CD4-positive, alpha-beta T cell (primary cell): ENCODE measurements at regions of chr1 and their contacts with region 1.

Region 1: GRCh38 chr1:25997828-25998761 is at the start of gene PAFAH2:
- DNase-seq: peak; percentile 92 to 99 (median 96)
- ATAC-seq: peak; percentile 95
- H3K4me3 ChIP-seq: peak within 1 kb of the TSS; percentile 71
- H3K4me3 Mint-ChIP-seq: peak within 1 kb of the TSS; percentile 91
- H3K27ac ChIP-seq: peak within 1 kb of the TSS; percentile 87 to 93
- H3K27ac Mint-ChIP-seq: peak within 1 kb of the TSS; percentile 97
- H3K4me1 ChIP-seq: peaks cover 21% of the 10 kb centered on the region
- H3K4me1 Mint-ChIP-seq: peaks cover 39% of the 10 kb centered on the region
- H3K27me3 ChIP-seq: no peaks in the 10 kb centered on the region
- H3K27me3 Mint-ChIP-seq: no peaks in the 10 kb centered on the region
- CTCF ChIP-seq: peak; percentile 90
- total RNA-seq, gene PAFAH2: 7.9 to 8.1 TPM

Region 2: GRCh38 chr1:25090707-25091422 is 907.2 kb before region 1 on chr1:
- CTCF ChIA-PET with region 1: no interaction called
- POLR2A ChIA-PET with region 1: no interaction called
- intact Hi-C with region 1: no loop called
- DNase-seq: no peak
- ATAC-seq: no peak
- H3K4me3 ChIP-seq: no peak overlapping the region
- H3K4me3 Mint-ChIP-seq: no peak overlapping the region
- H3K27ac ChIP-seq: no peak overlapping the region
- H3K27ac Mint-ChIP-seq: no peak overlapping the region
- H3K4me1 ChIP-seq: peaks cover 15% of the 10 kb centered on the region
- H3K4me1 Mint-ChIP-seq: peaks cover 21% of the 10 kb centered on the region
- H3K27me3 ChIP-seq: no peaks in the 10 kb centered on the region
- H3K27me3 Mint-ChIP-seq: no peaks in the 10 kb centered on the region
- CTCF ChIP-seq: no peak

Region 3: DNA sequence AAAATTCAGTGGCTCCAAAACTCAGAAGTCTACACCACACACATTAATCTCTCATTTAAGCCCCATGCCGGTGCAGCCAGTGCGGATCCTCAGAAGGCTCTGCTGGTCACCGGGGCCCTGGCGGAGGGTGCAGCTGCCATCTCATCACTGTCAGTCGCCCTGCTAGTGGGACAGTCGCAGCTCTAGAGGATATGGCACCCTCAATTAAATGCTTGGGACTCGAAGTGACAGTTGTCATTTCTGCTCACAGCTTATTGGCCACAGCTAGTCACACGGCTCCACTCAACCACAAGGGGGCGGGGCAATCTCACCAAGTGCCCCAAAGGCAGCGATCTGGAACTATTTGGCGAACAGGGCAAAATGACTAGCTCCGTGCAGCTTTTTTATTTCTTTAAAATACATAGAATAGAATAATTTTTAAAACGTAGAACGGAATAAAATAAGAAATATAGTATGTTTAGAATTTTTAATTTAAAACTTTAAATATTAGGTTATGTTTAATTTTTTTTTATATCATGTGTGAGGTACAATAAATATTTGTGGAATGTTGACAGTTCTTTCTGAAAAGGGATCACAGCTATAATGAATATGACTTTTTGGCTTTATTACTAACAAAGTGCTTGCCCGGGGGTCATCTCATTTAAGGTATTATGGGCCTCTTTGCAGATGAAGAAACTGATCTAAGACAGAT is 389.5 kb before region 1 on chr1:
- CTCF ChIA-PET with region 1: no interaction called
- POLR2A ChIA-PET with region 1: interaction called, 4 read pairs
- intact Hi-C with region 1: loop called in 1 of 2 experiments (anchors 2 kb)
- DNase-seq: peak; percentile 78 to 95 (median 86)
- ATAC-seq: peak; percentile 99
- H3K4me3 ChIP-seq: peak overlapping the region; percentile 6
- H3K4me3 Mint-ChIP-seq: peak overlapping the region; percentile 45
- H3K27ac ChIP-seq: no peak overlapping the region
- H3K27ac Mint-ChIP-seq: no peak overlapping the region
- H3K4me1 ChIP-seq: peaks cover 17% of the 10 kb centered on the region
- H3K4me1 Mint-ChIP-seq: peaks cover 25% of the 10 kb centered on the region
- H3K27me3 ChIP-seq: no peaks in the 10 kb centered on the region
- H3K27me3 Mint-ChIP-seq: no peaks in the 10 kb centered on the region
- CTCF ChIP-seq: peak; percentile 71

Region 4: DNA sequence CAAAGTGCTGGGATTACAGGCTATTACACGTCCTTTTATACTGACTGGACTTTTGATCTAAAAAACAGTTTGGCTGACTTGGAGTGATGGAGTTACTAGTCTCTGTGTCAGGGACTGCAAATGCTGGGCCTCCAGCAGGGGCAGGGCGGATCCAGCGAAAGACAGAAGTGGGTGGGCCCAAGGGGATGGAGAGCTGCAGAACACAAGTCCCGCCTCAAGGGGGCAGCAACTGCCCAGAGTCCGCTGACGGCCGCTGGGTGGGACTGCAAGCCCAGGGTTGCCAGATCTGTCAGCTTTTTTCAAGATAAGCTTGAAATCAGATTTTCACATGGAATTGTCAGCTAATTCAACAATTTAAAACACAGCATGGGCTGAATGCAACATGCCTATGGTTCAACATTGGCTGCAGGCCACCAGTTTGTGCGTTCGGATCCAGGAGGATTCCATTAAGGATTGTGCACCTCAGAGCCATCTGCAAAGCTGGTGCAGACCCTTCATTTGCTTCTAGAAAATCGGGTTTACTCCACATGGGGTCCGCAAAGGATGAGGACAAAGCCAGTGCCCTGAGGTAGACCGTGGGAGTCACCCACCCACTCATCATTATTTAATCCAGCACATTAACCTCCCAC is 102.6 kb before region 1 on chr1:
- CTCF ChIA-PET with region 1: interaction called, 184 read pairs
- POLR2A ChIA-PET with region 1: interaction called, 124 read pairs
- intact Hi-C with region 1: loop called (anchors 1 kb)
- DNase-seq: peak; percentile 86 to 96 (median 88)
- ATAC-seq: peak; percentile 100
- H3K4me3 ChIP-seq: no peak overlapping the region
- H3K4me3 Mint-ChIP-seq: no peak overlapping the region
- H3K27ac ChIP-seq: no peak overlapping the region
- H3K27ac Mint-ChIP-seq: peak overlapping the region; percentile 24
- H3K4me1 ChIP-seq: peaks cover 10% of the 10 kb centered on the region
- H3K4me1 Mint-ChIP-seq: peaks cover 9% of the 10 kb centered on the region
- H3K27me3 ChIP-seq: no peaks in the 10 kb centered on the region
- H3K27me3 Mint-ChIP-seq: no peaks in the 10 kb centered on the region
- CTCF ChIP-seq: peak; percentile 98

Region 5: GRCh38 chr1:25922056-25922969 is 75.8 kb before region 1 on chr1:
- CTCF ChIA-PET with region 1: interaction called, 5 read pairs
- POLR2A ChIA-PET with region 1: interaction called, 13 read pairs
- intact Hi-C with region 1: no loop called
- DNase-seq: peak in 13 of 14 experiments; percentile 13 to 76 (median 37)
- ATAC-seq: peak; percentile 77
- H3K4me3 ChIP-seq: peak overlapping the region; percentile 67
- H3K4me3 Mint-ChIP-seq: peak overlapping the region; percentile 88
- H3K27ac ChIP-seq: no peak overlapping the region
- H3K27ac Mint-ChIP-seq: peak overlapping the region; percentile 84
- H3K4me1 ChIP-seq: peaks cover 32% of the 10 kb centered on the region
- H3K4me1 Mint-ChIP-seq: peaks cover 41% of the 10 kb centered on the region
- H3K27me3 ChIP-seq: no peaks in the 10 kb centered on the region
- H3K27me3 Mint-ChIP-seq: no peaks in the 10 kb centered on the region
- CTCF ChIP-seq: no peak

Region 6: DNA sequence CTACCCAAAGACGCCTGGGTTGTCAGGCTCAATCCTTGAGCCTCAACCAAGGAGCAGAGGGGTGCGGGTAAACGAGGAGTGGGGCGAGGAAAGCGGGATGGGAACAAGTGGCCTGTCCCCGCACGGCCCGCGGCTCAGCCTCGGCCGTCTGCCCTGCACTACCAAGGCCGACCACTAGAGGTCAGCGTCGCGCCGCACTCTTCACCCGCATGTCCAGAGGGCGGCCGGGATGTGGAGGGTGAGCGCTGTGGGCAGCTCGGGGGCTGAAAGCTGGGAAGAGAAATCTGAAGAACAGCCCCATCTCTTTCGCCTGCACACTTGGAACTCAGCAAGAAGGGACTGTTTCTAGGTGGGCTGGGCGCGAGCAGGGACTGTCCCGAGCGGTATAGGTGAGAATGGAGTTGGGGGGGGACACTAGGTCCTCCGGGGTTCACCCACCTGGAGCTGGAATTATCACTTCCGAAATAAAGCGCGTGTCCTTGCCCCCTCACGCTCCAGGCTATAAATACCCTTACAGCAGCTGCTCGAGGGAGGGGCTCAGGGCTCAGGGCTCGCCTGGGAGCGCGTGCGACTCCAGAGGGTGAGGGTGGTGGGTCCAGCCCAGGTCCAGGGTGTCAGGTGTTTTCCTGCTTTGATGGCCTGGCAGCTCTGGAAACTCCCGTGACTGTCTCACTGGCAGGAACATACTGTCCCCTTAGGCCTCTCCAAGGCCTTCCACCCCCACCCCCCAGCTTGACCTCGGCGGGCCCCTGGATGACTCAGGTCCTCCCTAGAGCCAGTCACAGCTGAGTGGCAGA is 38.1 kb after region 1 on chr1:
- CTCF ChIA-PET with region 1: interaction called, 5 read pairs
- POLR2A ChIA-PET with region 1: interaction called, 3 read pairs
- intact Hi-C with region 1: loop called in 1 of 2 experiments (anchors 1 kb)
- DNase-seq: peak; percentile 57 to 88 (median 72)
- ATAC-seq: peak; percentile 65
- H3K4me3 ChIP-seq: peak overlapping the region; percentile 99
- H3K4me3 Mint-ChIP-seq: peak overlapping the region; percentile 94
- H3K27ac ChIP-seq: peak overlapping the region; percentile 60 to 75
- H3K27ac Mint-ChIP-seq: peak overlapping the region; percentile 88
- H3K4me1 ChIP-seq: peaks cover 22% of the 10 kb centered on the region
- H3K4me1 Mint-ChIP-seq: peaks cover 17% of the 10 kb centered on the region
- H3K27me3 ChIP-seq: peaks cover 0 to 2% of the 10 kb centered on the region in 2 experiments
- H3K27me3 Mint-ChIP-seq: no peaks in the 10 kb centered on the region
- CTCF ChIP-seq: peak; percentile 100